Activated B cell treated with CpG ODN at 0.5 μM for 24 hours (primary cell): ENCODE measurements at regions of chrX and their contacts with region 1.

Region 1: GRCh38 chrX:72018277-72019112 is 107.8 kb downstream of the NHSL2 start:
- DNase-seq: peak; percentile 65
- ATAC-seq: peak; percentile 89
- H3K4me3 Mint-ChIP-seq: peak overlapping the region; percentile 38
- H3K27ac Mint-ChIP-seq: no peak overlapping the region
- H3K4me1 Mint-ChIP-seq: peaks cover 10% of the 10 kb centered on the region
- H3K27me3 Mint-ChIP-seq: peaks cover 5% of the 10 kb centered on the region
- CTCF ChIP-seq: no peak

Region 2: GRCh38 chrX:71976753-71977152 is 41.7 kb before region 1 on chrX:
- CTCF ChIA-PET with region 1: no interaction called
- POLR2A ChIA-PET with region 1: no interaction called
- intact Hi-C with region 1: no loop called
- DNase-seq: no peak
- ATAC-seq: no peak
- H3K4me3 Mint-ChIP-seq: no peak overlapping the region
- H3K27ac Mint-ChIP-seq: no peak overlapping the region
- H3K4me1 Mint-ChIP-seq: no peaks in the 10 kb centered on the region
- H3K27me3 Mint-ChIP-seq: peaks cover 5% of the 10 kb centered on the region
- CTCF ChIP-seq: no peak

Region 3: GRCh38 chrX:72238721-72239475 is 220.4 kb after region 1 on chrX and contains the start of gene ERCC6L:
- CTCF ChIA-PET with region 1: no interaction called
- POLR2A ChIA-PET with region 1: no interaction called
- intact Hi-C with region 1: loop called (anchors 2 kb)
- DNase-seq: peak; percentile 76
- ATAC-seq: peak; percentile 99
- H3K4me3 Mint-ChIP-seq: peak within 1 kb of the TSS; percentile 80
- H3K27ac Mint-ChIP-seq: peak within 1 kb of the TSS; percentile 79
- H3K4me1 Mint-ChIP-seq: peaks cover 3% of the 10 kb centered on the region
- H3K27me3 Mint-ChIP-seq: no peaks in the 10 kb centered on the region
- CTCF ChIP-seq: no peak
- total RNA-seq, gene ERCC6L: 0.91 and 1.1 TPM in 2 replicates